Activated naive CD4-positive, alpha-beta T cell treated with anti-CD3 and anti-CD28 coated beads for 36 hours (primary cell): ENCODE measurements at regions of chr5 and their contacts with region 1.

Region 1: DNA sequence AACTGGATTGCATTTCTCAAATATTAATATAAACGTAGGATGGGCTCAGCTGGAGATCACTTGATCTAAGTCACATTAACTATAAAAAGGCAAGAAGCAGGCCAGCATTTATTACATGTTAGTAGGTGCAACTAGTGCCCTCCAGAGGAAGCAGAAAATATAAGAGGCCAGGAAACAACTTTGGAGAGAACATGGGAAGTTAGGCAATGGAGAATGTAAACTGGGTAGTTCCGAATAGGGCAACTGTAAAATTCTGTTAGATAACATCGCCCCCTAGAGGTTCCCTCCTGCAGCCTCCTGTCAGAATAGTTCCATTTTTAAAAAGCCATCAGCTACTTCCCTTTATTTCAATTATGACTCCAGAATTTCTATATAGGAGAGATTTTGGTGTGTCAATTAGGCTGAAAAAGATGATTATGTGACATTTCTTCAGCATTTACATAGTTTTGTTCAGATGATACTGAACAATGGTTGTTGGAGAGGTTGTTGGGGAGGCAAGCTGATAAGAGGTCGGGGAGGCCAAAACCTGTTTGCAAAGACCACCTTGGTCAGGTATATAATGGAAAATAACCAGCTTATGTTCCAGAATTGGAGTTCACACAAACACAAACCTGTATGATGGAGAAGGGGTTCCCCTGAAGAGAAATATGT is 22.4 kb downstream of the CCL28 start:
- DNase-seq: peak; percentile 72
- H3K4me3 Mint-ChIP-seq: no peak overlapping the region
- H3K27ac Mint-ChIP-seq: no peak overlapping the region
- H3K4me1 Mint-ChIP-seq: peaks cover 32% of the 10 kb centered on the region
- H3K27me3 Mint-ChIP-seq: no peaks in the 10 kb centered on the region

Region 2: GRCh38 chr5:41869739-41870626 is 1519.8 kb before region 1 on chr5 and contains the start of gene OXCT1:
- CTCF ChIA-PET with region 1: no interaction called
- intact Hi-C with region 1: loop called (anchors 10 kb)
- DNase-seq: peak; percentile 93
- H3K4me3 Mint-ChIP-seq: peak within 1 kb of the TSS; percentile 92
- H3K27ac Mint-ChIP-seq: peak within 1 kb of the TSS; percentile 88
- H3K4me1 Mint-ChIP-seq: peaks cover 53% of the 10 kb centered on the region
- H3K27me3 Mint-ChIP-seq: no peaks in the 10 kb centered on the region
- total RNA-seq, gene OXCT1: 76.1 to 78.8 TPM

Region 3: DNA sequence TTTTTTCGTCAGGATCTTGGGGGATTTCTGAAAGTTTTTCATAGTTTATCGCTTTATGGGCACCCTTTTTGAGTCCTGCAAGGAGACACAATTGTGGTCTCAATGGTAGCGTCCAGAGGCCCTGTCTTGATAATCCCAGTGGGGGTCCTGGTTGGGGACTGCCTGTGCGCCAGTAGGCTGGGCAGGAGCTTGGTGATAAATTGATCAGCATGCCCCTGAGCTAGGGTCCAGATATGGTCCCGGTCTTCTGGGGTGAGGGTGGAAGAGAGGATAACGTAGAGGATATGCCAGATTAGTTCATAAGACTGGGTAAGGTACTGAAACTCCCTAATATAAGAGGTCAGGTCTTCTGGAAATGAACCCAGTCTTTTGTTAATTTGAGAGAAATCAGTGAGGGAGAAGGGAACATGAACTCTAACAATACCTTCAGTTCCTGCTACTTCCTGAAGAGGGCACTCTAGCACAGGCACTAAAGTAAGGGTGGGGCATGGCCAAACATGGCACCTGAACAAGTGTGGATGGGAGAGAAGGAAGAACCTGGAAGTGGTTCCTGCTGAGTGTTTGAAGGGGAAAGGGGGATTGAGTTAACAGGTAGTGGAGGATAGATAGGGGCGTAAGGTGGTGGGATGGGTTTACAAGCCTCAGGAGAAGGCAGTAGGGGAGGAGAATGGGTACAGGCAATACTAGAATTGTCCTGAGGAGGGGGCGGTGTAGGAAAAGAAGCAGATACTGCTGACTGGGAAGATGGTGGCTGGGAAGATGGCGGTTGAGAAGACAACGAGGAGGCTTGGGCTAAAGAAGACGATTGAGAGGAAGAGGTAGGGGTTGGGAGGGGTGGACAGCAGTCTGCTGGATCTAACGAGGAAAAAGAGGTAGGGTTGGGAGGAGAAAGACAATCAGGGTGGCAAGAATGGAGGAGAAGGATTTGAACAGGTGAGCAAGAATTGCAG is 315.9 kb before region 1 on chr5:
- CTCF ChIA-PET with region 1: interaction called, 10 read pairs
- intact Hi-C with region 1: loop called (anchors 1 kb)
- DNase-seq: peak; percentile 70
- H3K4me3 Mint-ChIP-seq: no peak overlapping the region
- H3K27ac Mint-ChIP-seq: peak overlapping the region; percentile 43
- H3K4me1 Mint-ChIP-seq: peaks cover 39% of the 10 kb centered on the region
- H3K27me3 Mint-ChIP-seq: no peaks in the 10 kb centered on the region

Region 4: DNA sequence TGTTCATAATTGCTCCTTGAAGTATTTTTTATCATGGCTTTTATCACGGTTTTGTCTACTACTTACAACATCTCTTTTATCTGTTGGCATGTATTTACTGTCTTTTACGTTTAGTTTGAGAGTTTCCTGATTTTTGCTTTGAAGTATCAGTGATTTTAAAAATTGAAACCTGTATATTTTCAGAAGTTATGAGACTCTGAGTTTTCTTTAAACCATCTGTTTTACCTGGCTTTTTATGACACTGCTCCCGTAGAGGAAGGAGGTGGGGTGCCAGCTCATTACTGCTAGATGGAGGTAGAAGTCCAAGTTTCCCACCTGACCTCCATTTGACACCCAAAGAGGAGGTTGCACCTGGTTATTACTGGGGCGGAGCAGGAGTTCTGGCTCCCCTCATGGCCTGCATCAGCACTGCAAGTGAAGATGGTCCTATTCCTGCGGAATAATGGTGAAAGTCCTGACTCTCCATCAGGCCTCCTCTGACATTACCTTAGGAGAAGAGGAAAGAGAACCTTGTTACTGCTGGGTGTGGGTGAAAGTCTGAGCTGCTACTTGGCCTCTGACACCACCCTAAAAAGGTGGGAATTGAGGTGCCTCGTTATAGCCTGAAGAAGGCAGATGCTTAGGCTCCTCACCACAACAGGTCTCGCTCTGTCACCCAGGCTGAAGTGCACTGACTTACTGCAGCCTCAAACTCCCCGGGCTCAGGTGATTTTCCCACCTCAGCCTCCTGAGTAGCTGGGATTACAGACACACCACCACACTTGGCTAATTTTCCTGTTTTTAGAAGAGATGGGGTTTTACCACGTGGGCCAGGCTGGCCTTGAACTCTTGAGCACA is 279.0 kb before region 1 on chr5:
- CTCF ChIA-PET with region 1: interaction called, 25 read pairs
- intact Hi-C with region 1: loop called (anchors 1 kb)
- DNase-seq: peak; percentile 81
- H3K4me3 Mint-ChIP-seq: no peak overlapping the region
- H3K27ac Mint-ChIP-seq: peak overlapping the region; percentile 71
- H3K4me1 Mint-ChIP-seq: peaks cover 43% of the 10 kb centered on the region
- H3K27me3 Mint-ChIP-seq: no peaks in the 10 kb centered on the region

Region 5: DNA sequence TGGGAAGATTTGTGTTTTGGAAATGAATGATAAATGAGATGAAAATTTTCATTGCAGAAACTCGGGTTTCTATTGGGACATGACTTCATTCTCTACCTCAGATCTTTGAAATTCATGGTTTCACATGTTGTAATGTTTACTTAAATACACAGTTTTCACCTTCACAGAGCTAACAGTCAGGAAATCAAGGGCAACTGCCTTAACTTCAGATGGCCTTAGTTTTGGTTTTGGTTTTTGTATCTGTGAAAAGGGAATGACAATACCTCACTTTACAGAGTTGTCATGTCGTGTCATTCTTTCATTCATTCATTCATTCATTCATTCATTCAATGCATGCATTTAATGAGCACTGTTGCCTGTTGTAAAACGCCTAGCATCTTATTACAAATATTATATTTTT is 155.9 kb before region 1 on chr5:
- CTCF ChIA-PET with region 1: interaction called, 24 read pairs
- intact Hi-C with region 1: loop called (anchors 1 kb)
- DNase-seq: no peak
- H3K4me3 Mint-ChIP-seq: no peak overlapping the region
- H3K27ac Mint-ChIP-seq: no peak overlapping the region
- H3K4me1 Mint-ChIP-seq: peaks cover 5% of the 10 kb centered on the region
- H3K27me3 Mint-ChIP-seq: no peaks in the 10 kb centered on the region

Region 6: DNA sequence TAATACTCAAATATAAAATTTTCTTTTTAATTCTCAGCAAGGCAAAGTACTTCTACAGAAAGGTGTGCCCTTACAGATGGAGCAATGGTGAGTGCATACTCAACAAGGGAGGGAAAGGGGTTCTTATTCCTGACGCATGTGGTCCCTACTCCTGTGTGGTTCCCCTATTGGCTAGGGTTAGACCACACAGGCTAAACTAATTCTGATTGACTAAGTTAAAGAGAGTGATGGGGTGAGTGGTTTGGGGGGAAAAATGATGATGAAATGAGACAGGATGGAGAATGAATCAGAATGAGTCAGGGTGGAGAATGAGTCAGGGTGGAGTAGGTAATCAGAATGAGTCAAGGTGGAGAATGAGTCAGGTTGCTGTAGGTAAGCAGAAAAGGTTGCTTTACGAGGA is 53.6 kb before region 1 on chr5:
- CTCF ChIA-PET with region 1: interaction called, 10 read pairs
- intact Hi-C with region 1: loop called (anchors 2 kb)
- DNase-seq: peak; percentile 40
- H3K4me3 Mint-ChIP-seq: no peak overlapping the region
- H3K27ac Mint-ChIP-seq: peak overlapping the region; percentile 84
- H3K4me1 Mint-ChIP-seq: peaks cover 12% of the 10 kb centered on the region
- H3K27me3 Mint-ChIP-seq: peaks cover 16% of the 10 kb centered on the region

Region 7: DNA sequence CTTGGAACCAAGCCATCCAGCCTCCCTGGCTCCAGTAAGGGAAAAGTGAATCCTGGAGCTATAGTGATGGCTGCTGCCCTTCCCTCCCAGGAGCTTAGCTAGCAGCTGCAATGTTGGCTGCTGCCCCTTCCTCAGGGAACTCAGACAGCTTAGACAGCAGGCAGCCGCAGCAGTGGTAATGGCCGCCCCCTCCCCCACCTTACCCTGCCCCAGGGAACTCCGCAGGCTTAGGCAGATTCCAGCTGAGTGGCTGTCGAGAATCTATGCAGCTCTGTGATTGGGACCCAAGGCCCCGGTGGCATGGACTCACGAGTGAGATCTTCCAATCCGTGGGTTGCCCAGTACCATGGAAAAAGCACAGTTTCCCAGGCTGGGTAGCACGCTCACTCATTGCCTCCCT is 591.8 kb after region 1 on chr5:
- CTCF ChIA-PET with region 1: no interaction called
- intact Hi-C with region 1: no loop called
- DNase-seq: no peak
- H3K4me3 Mint-ChIP-seq: no peak overlapping the region
- H3K27ac Mint-ChIP-seq: no peak overlapping the region
- H3K4me1 Mint-ChIP-seq: no peaks in the 10 kb centered on the region
- H3K27me3 Mint-ChIP-seq: peaks cover 3% of the 10 kb centered on the region